Pancreas (tissue), 10 donors: ENCODE measurements at regions of chr14 and their contacts with region 1.

Region 1: DNA sequence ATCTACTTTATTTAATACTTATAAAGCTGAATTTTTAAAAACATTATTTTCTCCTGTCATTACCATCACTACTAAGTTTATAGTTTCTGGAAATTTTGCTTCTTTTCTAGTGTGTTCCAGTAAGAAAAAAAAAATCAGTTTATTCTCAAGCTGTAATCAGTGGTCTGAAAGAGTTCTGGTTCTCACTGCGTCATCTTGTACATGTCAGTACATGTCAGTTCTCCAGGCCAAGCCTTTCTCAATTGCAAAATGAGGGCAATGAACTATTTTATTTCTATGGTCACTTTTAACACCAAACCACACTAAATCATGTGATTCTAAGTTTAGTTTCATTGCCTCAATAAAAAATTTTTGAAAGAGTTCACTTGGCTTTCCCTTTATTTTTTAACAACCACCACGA is 468.9 kb upstream of the LRFN5 start:
- DNase-seq: no peak
- ATAC-seq: no peak
- H3K4me3 ChIP-seq: no peak overlapping the region
- H3K27ac ChIP-seq: no peak overlapping the region
- H3K4me1 ChIP-seq: no peaks in the 10 kb centered on the region
- H3K27me3 ChIP-seq: no peaks in the 10 kb centered on the region
- CTCF ChIP-seq: no peak

Region 2: GRCh38 chr14:41201721-41202120 is 64.0 kb after region 1 on chr14:
- intact Hi-C with region 1: loop called in 2 of 3 experiments (anchors 5 kb)
- DNase-seq: no peak
- ATAC-seq: no peak
- H3K4me3 ChIP-seq: no peak overlapping the region
- H3K27ac ChIP-seq: no peak overlapping the region
- H3K4me1 ChIP-seq: no peaks in the 10 kb centered on the region
- H3K27me3 ChIP-seq: no peaks in the 10 kb centered on the region
- CTCF ChIP-seq: no peak